MCF 10A (cell line): ENCODE measurements at regions of chr2 and their contacts with region 1.

Region 1: GRCh38 chr2:241637000-241637791 is at the starts of genes ATG4B and THAP4:
- DNase-seq: peak; percentile 86
- H3K4me3 Mint-ChIP-seq: peak within 1 kb of the TSS; percentile 90
- H3K27ac Mint-ChIP-seq: peak within 1 kb of the TSS; percentile 86
- H3K4me1 Mint-ChIP-seq: peaks cover 34% of the 10 kb centered on the region
- H3K27me3 Mint-ChIP-seq: no peaks in the 10 kb centered on the region
- CTCF ChIP-seq: no peak
- total RNA-seq, gene ATG4B: 70.9 and 72.8 TPM in 2 replicates
- total RNA-seq, gene THAP4: 64.5 and 91.8 TPM in 2 replicates

Region 2: GRCh38 chr2:241355983-241356870 is 281.0 kb before region 1 on chr2 and contains the start of gene FARP2:
- CTCF ChIA-PET with region 1: no interaction called
- POLR2A ChIA-PET with region 1: no interaction called
- intact Hi-C with region 1: loop called (anchors 10 kb)
- DNase-seq: peak; percentile 95
- H3K4me3 Mint-ChIP-seq: peak within 1 kb of the TSS; percentile 73
- H3K27ac Mint-ChIP-seq: peak within 1 kb of the TSS; percentile 78
- H3K4me1 Mint-ChIP-seq: peaks cover 34% of the 10 kb centered on the region
- H3K27me3 Mint-ChIP-seq: no peaks in the 10 kb centered on the region
- CTCF ChIP-seq: no peak
- total RNA-seq, gene FARP2: 31.7 and 32.6 TPM in 2 replicates

Region 3: DNA sequence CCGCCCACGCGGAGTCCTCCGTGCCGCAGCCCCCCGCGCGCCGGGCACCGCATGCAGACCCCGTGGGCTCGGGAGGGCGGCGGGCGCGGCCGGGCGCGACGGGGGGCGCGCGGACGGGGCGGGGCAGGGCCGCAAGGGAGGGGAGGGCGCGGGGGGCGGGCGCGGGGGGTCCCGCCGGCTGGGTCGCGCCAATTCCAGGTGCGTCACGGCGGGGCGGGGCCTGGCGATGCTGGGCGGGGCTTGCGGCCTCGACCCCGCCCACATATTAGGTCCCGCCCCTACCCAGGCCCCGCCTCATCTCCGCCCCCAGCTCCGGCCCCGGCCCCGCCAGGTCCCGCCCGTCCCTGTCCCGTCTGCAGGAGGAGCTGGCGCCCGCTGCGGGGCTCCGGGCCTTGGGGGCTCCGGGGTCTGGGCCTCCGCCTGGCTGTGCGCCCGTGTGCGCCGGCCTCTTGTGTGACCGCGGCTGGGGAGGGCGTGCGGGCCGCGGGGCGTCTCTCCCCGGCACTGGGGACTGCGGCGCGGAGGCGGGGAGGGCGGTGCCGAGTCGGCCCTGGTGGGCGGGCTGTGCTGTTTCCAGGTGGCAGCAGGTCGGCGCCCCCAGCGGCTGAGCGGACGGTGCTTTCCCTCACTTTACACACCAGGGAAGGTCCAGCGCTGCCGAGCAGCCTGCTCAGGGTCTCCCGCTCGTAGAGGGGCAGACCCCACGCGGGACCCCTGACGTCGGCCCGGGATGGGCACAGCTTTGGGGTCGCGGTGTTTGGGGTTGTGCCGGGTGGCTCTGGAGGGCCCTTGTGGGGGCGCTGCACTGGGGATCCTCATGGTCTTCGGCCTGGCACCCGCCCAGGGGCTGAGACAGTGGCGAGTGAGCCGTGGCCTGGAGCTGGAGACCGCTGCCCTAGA is 65.2 kb after region 1 on chr2:
- CTCF ChIA-PET with region 1: no interaction called
- POLR2A ChIA-PET with region 1: interaction called, 13 read pairs
- intact Hi-C with region 1: no loop called
- DNase-seq: peak; percentile 69
- H3K4me3 Mint-ChIP-seq: peak overlapping the region; percentile 76
- H3K27ac Mint-ChIP-seq: peak overlapping the region; percentile 41
- H3K4me1 Mint-ChIP-seq: peaks cover 10% of the 10 kb centered on the region
- H3K27me3 Mint-ChIP-seq: no peaks in the 10 kb centered on the region
- CTCF ChIP-seq: peak; percentile 18

Region 4: GRCh38 chr2:241820625-241821384 is 183.6 kb after region 1 on chr2:
- CTCF ChIA-PET with region 1: no interaction called
- POLR2A ChIA-PET with region 1: no interaction called
- intact Hi-C with region 1: no loop called
- DNase-seq: no peak
- H3K4me3 Mint-ChIP-seq: no peak overlapping the region
- H3K27ac Mint-ChIP-seq: no peak overlapping the region
- H3K4me1 Mint-ChIP-seq: no peaks in the 10 kb centered on the region
- H3K27me3 Mint-ChIP-seq: peaks cover 22% of the 10 kb centered on the region
- CTCF ChIP-seq: no peak